T-cell (primary cell): ENCODE measurements at regions of chr18 and their contacts with region 1.

Region 1: GRCh38 chr18:47574966-47575365 is 323.5 kb upstream of the SKOR2 start:
- DNase-seq: no peak
- ATAC-seq: no peak
- H3K4me3 ChIP-seq: no peak overlapping the region
- H3K4me3 Mint-ChIP-seq: no peak overlapping the region
- H3K27ac ChIP-seq: no peak overlapping the region
- H3K27ac Mint-ChIP-seq: no peak overlapping the region
- H3K4me1 ChIP-seq: no peaks in the 10 kb centered on the region
- H3K4me1 Mint-ChIP-seq: no peaks in the 10 kb centered on the region
- H3K27me3 ChIP-seq: peaks cover 0 to 7% of the 10 kb centered on the region in 2 experiments
- H3K27me3 Mint-ChIP-seq: peaks cover 3 to 11% of the 10 kb centered on the region in 2 donors

Region 2: DNA sequence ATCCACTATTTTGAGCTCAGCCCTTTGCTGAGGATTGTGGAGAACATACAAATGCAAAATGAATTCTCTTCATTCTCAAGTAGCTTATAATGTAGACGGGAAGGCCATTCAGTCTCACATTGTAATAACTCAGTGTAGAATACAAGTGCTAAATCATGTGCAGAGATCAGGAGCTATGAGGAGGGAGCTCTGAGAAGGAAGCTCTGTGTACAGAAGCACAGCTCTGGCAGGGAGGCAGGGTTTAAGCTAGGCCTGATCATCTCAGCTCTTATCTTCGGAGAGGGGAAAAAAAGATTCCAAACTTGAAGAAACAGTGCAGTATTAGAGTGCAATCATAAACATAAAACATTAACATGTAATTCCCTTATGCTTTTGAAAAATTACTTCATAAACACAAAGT is 32.4 kb before region 1 on chr18:
- CTCF ChIA-PET with region 1: no interaction called
- POLR2A ChIA-PET with region 1: no interaction called
- DNase-seq: no peak
- ATAC-seq: no peak
- H3K4me3 ChIP-seq: no peak overlapping the region
- H3K4me3 Mint-ChIP-seq: no peak overlapping the region
- H3K27ac ChIP-seq: no peak overlapping the region
- H3K27ac Mint-ChIP-seq: no peak overlapping the region
- H3K4me1 ChIP-seq: no peaks in the 10 kb centered on the region
- H3K4me1 Mint-ChIP-seq: no peaks in the 10 kb centered on the region
- H3K27me3 ChIP-seq: peaks cover 0 to 5% of the 10 kb centered on the region in 2 experiments
- H3K27me3 Mint-ChIP-seq: peaks cover 9 to 18% of the 10 kb centered on the region in 2 donors

Region 3: DNA sequence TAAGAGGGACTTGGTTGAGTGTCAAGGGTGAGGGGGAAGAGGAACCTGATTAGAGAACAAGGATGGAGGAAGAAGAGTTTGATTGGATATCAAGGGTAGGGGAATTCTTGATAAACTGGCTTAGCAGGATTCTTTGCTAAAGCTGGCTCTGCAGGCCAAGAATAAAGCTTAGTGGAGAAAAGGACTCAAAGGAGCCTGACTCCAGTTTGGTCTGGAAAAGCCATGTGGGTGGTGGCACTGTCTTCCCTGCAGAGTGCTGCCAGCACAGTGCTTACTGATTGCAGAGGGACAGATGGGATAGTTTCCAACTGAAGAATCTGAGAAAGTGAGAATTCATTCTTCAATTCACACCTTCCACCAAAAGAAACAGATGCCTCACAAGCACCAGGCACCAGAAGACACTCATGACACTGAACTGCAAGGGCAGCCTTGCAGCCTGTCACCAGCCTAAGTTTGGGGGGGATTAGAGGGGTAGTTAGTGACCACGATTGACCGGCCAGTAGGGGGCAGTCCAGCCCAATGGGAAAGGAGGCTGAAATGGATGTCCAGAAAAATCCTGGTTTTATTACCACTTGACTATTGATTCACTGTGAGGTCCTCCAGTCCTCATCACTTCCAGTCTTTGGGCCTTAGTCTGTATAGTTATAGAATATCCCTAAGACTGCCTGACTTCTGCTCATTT is 21.0 kb after region 1 on chr18:
- CTCF ChIA-PET with region 1: interaction called in 1 of 2 experiments, 10 read pairs
- POLR2A ChIA-PET with region 1: no interaction called
- DNase-seq: peak in 1 of 35 experiments; percentile 2
- ATAC-seq: no peak
- H3K4me3 ChIP-seq: no peak overlapping the region
- H3K4me3 Mint-ChIP-seq: no peak overlapping the region
- H3K27ac ChIP-seq: no peak overlapping the region
- H3K27ac Mint-ChIP-seq: no peak overlapping the region
- H3K4me1 ChIP-seq: no peaks in the 10 kb centered on the region
- H3K4me1 Mint-ChIP-seq: no peaks in the 10 kb centered on the region
- H3K27me3 ChIP-seq: peaks cover 3 to 16% of the 10 kb centered on the region in 2 experiments
- H3K27me3 Mint-ChIP-seq: peaks cover 37 to 43% of the 10 kb centered on the region in 2 donors

Region 4: DNA sequence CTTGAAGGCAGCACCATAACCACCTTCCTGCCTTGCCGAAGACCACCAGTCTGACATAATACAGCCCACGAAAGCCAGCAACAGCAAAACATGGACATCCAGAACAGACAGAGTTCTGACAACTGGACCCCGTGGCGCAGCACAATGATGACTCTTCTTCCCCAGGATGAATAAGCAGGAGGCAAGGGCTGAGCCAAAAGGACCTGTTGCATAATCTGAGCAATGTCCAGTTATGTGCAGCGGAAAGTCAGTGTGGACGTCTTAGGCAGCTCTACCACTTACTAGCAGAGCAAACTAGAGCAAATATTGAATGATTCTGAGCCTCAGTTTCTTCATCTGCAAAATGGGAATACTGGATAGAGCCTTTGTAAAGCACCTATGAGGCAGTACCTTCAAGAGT is 609.2 kb after region 1 on chr18:
- CTCF ChIA-PET with region 1: no interaction called
- POLR2A ChIA-PET with region 1: no interaction called
- DNase-seq: no peak
- ATAC-seq: no peak
- H3K4me3 ChIP-seq: no peak overlapping the region
- H3K4me3 Mint-ChIP-seq: no peak overlapping the region
- H3K27ac ChIP-seq: no peak overlapping the region
- H3K27ac Mint-ChIP-seq: no peak overlapping the region
- H3K4me1 ChIP-seq: no peaks in the 10 kb centered on the region
- H3K4me1 Mint-ChIP-seq: no peaks in the 10 kb centered on the region
- H3K27me3 ChIP-seq: peaks cover 2 to 23% of the 10 kb centered on the region in 2 experiments
- H3K27me3 Mint-ChIP-seq: peaks cover 27 to 31% of the 10 kb centered on the region in 2 donors